ENCODE measurements at regions of chr10 and their contacts with region 1.

Region 1: GRCh38 chr10:33115738-33116719 is 158.0 kb upstream of the ITGB1 start:
- DNase-seq: peak; percentile 53
- H3K4me3 Mint-ChIP-seq: peak overlapping the region; percentile 47
- H3K27ac Mint-ChIP-seq: peak overlapping the region; percentile 81
- H3K4me1 Mint-ChIP-seq: peaks cover 92% of the 10 kb centered on the region
- H3K27me3 Mint-ChIP-seq: peaks cover 4% of the 10 kb centered on the region

Region 2: DNA sequence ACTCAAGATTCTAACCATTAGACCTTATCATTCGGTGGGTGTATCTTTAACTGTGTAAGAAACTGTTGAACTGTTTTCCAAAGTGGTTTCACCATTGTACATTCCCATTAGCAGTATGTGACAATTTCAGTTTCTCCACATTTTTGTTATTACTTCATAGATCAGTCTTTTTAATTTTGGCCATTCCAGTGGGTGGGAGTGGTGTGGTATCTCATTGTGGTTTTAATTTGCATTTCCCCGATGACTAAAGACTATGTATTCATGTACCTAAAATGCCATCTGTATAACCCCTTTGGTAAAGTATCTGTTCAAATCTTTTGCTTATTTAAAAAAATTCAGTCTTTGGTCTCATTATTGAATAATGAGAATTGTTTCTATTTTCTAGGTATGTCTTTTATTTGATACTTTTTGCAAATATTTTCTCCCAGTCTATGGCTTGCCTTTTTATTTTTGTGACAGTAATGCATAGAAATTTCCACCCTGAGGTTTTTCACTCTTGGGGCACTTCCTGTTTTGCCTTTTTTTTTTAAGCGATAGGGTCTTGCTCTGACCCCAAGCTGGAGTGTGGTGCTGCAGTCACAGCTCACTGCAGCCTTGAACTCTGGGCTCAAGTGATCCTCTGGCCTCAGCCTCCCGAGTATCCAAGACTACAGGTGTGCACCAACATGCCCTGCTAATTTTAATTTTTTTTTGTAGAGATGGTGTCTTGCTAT is 16.9 kb before region 1 on chr10:
- CTCF ChIA-PET with region 1: interaction called, 17 read pairs
- POLR2A ChIA-PET with region 1: interaction called, 30 read pairs
- intact Hi-C with region 1: loop called (anchors 1 kb)
- DNase-seq: no peak
- H3K4me3 Mint-ChIP-seq: peak overlapping the region; percentile 6
- H3K27ac Mint-ChIP-seq: peak overlapping the region; percentile 74
- H3K4me1 Mint-ChIP-seq: peaks cover 70% of the 10 kb centered on the region
- H3K27me3 Mint-ChIP-seq: no peaks in the 10 kb centered on the region

Region 3: GRCh38 chr10:33143160-33143728 is 27.2 kb after region 1 on chr10:
- CTCF ChIA-PET with region 1: interaction called, 18 read pairs
- POLR2A ChIA-PET with region 1: interaction called, 10 read pairs
- intact Hi-C with region 1: loop called (anchors 1 kb)
- DNase-seq: peak; percentile 78
- H3K4me3 Mint-ChIP-seq: no peak overlapping the region
- H3K27ac Mint-ChIP-seq: peak overlapping the region; percentile 66
- H3K4me1 Mint-ChIP-seq: peaks cover 63% of the 10 kb centered on the region
- H3K27me3 Mint-ChIP-seq: peaks cover 1% of the 10 kb centered on the region

Region 4: GRCh38 chr10:33155720-33156638 is 40.0 kb after region 1 on chr10:
- CTCF ChIA-PET with region 1: interaction called, 14 read pairs
- POLR2A ChIA-PET with region 1: interaction called, 16 read pairs
- intact Hi-C with region 1: loop called (anchors 1 kb)
- DNase-seq: peak; percentile 53
- H3K4me3 Mint-ChIP-seq: no peak overlapping the region
- H3K27ac Mint-ChIP-seq: no peak overlapping the region
- H3K4me1 Mint-ChIP-seq: peaks cover 46% of the 10 kb centered on the region
- H3K27me3 Mint-ChIP-seq: no peaks in the 10 kb centered on the region